Left cardiac atrium (tissue), 4 donors: ENCODE measurements at regions of chr11 and their contacts with region 1.

Region 1: GRCh38 chr11:84714316-84714780 is 912.8 kb downstream of the DLG2 start:
- DNase-seq: peak; percentile 50
- ATAC-seq: peak; percentile 50 to 72

Region 2: GRCh38 chr11:84497981-84498411 is 216.4 kb before region 1 on chr11:
- intact Hi-C with region 1: no loop called
- DNase-seq: peak; percentile 83
- ATAC-seq: peak; percentile 47 to 92

Region 3: GRCh38 chr11:84558085-84558905 is 156.1 kb before region 1 on chr11:
- intact Hi-C with region 1: loop called (anchors 2 to 10 kb)
- DNase-seq: no peak
- ATAC-seq: peak; percentile 54 to 77

Region 4: DNA sequence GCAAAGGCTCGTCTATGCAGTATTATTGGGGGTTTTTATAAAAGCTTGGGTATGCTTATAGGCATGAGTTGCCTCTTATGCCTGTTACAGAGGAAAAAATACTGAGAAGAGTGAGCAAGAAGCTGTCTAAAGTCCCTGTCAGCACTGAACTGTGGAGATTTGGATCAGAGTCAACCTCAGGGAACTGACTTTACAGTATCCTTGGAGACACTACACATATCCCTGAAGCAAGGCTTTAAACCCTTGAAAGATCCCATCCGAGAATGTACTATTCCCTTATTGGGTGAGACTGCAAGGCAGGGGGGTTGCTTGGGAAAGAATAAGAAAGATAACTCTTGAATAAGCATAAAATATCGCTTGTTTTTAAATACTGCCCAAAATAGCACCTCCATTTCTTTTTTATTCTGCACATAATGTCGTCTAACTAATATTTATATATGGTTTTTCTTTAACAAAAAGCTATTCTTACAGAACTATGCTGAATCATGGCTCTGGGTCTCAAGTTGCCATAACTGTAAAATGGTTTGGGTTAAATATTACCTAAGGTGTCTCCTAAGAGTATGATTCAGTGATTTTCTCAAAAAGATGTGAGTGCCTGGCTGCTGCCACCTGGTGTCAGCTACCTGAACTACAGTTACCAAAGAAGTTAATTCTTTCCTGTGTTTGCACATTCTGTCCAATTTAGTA is 150.0 kb before region 1 on chr11:
- intact Hi-C with region 1: loop called (anchors 2 to 10 kb)
- DNase-seq: peak; percentile 26
- ATAC-seq: peak in 1 of 2 donors; percentile 33